HepG2 (cell line): ENCODE measurements at regions of chr1 and their contacts with region 1.

Region 1: DNA sequence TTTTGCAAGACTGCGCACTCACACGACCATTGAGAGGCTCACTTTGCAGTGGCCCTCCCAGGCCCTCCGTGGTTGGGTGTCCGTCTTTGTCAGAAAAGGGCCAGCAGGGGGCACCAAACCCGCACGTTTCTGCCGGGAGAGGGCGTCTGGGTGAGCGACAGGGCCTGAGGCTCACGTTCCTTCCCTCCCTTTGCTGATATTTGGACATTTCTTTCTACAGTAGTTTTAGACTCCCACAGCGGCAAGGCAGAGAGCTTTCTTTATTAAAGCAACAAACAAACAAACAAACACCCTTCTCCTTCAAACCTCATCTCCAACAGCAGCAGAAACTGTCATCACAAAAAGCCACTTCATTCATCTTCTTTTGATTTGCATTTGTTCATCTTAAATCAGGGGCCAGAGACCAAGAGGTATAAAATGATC is 79.2 kb upstream of the WDR26 start:
- DNase-seq: peak; percentile 54
- ATAC-seq: peak; percentile 94
- H3K4me3 ChIP-seq: 0 out of 6 replicates have a peak overlapping the region, but pooled peaks of 1 of the 3 experiments have one; percentile 13
- H3K27ac ChIP-seq: no peak overlapping the region
- H3K4me1 ChIP-seq: peaks cover 36% of the 10 kb centered on the region
- H3K27me3 ChIP-seq: no peaks in the 10 kb centered on the region; a peak in 1 of 5 replicates
- CTCF ChIP-seq: peak; percentile 97
- EP300 ChIP-seq: no peak
- POLR2A ChIP-seq: no peak
- RAD21 ChIP-seq: peak; percentile 83

Region 2: DNA sequence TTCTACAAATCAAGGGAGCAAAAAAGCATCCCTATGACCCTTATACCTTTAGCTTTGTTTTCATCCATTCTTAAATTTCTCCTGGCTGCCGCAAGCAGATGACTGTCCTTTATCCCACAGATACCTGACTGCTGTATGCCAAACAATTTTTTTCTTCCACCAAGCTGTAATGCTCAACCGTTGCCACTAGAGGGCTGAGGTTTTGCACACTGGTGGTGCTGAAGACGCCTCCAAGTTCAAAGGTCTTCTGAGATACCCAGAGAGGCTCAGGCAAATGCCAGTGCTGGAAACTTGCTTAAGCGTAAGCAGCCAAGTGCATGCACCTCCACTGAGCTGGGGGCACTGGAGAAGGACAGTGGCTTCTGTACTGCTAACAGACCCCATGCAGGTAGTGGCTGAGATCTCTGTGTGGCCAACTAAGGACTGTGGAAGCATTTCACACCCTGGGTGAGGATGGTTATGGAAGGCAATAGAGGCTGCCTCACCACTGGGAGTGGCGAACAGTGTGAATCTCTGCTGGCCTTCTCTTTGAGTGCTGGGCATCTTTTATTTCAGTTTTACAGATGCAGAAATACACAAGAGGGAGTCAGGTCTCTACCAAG is 130.9 kb after region 1 on chr1:
- CTCF ChIA-PET with region 1: interaction called, 9 read pairs
- POLR2A ChIA-PET with region 1: no interaction called
- in situ Hi-C with region 1: loop called (anchors 5 kb)
- intact Hi-C with region 1: loop called (anchors 1 kb)
- DNase-seq: peak; percentile 35
- ATAC-seq: peak; percentile 74
- H3K4me3 ChIP-seq: no peak overlapping the region
- H3K27ac ChIP-seq: no peak overlapping the region
- H3K4me1 ChIP-seq: no peaks in the 10 kb centered on the region
- H3K27me3 ChIP-seq: peaks cover 3 to 7% of the 10 kb centered on the region in 2 experiments; a peak in 3 of 5 replicates
- CTCF ChIP-seq: peak; percentile 80
- EP300 ChIP-seq: no peak
- POLR2A ChIP-seq: no peak
- RAD21 ChIP-seq: 0 out of 2 replicates have a peak, but pooled peaks have one; percentile 31

Region 3: GRCh38 chr1:224851210-224851847 is 337.5 kb after region 1 on chr1:
- CTCF ChIA-PET with region 1: interaction called, 4 read pairs
- POLR2A ChIA-PET with region 1: no interaction called
- in situ Hi-C with region 1: loop called (anchors 5 kb)
- intact Hi-C with region 1: loop called (anchors 1 kb)
- DNase-seq: peak; percentile 9
- ATAC-seq: peak; percentile 84
- H3K4me3 ChIP-seq: no peak overlapping the region
- H3K27ac ChIP-seq: no peak overlapping the region
- H3K4me1 ChIP-seq: no peaks in the 10 kb centered on the region
- H3K27me3 ChIP-seq: no peaks in the 10 kb centered on the region
- CTCF ChIP-seq: peak; percentile 71
- EP300 ChIP-seq: no peak
- POLR2A ChIP-seq: no peak
- RAD21 ChIP-seq: no peak

Region 4: DNA sequence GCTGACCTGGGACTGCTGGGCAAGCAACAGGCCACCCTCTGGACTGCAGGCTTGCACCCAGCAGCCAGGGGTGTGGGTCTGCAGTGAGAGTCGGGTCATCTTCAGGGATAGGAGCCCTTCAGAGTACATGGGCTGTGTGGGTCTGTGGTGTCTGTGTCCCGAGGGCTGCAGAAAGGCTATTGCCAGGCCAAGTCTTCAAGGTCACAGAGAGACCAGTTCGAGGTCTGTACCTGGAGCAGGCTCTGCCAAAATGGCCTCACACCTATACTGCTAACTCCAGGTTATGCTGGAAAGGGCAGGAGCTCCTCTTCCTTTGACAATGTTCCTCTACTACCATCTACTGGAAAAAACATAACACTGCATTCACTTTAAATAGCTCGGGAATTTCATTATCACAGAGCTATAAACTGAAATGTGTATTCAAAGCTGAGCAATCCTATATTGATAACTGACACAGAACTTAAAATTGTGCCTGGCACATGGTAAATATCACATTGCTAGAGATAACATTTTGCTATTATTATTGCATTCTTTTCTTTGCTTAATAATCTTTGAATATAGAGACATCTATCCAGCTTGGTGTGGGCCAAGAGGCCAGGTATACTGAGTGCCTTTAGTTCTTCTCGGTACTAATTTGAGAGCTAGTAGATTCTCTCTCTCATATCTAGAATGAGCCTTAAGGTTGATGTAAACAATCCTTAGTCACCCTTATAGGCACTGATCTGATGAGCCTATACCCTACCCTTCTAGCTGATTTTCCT is 408.8 kb after region 1 on chr1:
- CTCF ChIA-PET with region 1: interaction called, 20 read pairs
- POLR2A ChIA-PET with region 1: no interaction called
- in situ Hi-C with region 1: loop called (anchors 10 kb)
- intact Hi-C with region 1: loop called (anchors 1 kb)
- DNase-seq: peak; percentile 30
- ATAC-seq: peak; percentile 93
- H3K4me3 ChIP-seq: no peak overlapping the region
- H3K27ac ChIP-seq: no peak overlapping the region
- H3K4me1 ChIP-seq: 0 out of 2 replicates have a peak, but pooled peaks cover 8% of the 10 kb centered on the region
- H3K27me3 ChIP-seq: no peaks in the 10 kb centered on the region
- CTCF ChIP-seq: peak; percentile 80
- EP300 ChIP-seq: no peak
- POLR2A ChIP-seq: no peak
- RAD21 ChIP-seq: peak; percentile 64